CD14-positive monocyte (primary cell): ENCODE measurements at regions of chr9 and their contacts with region 1.

Region 1: GRCh38 chr9:113591001-113591898 is 127.7 kb downstream of the RGS3 start:
- DNase-seq: peak in 2 of 3 donors; percentile 48 to 49
- H3K4me3 ChIP-seq: no peak overlapping the region
- H3K4me3 Mint-ChIP-seq: no peak overlapping the region
- H3K27ac ChIP-seq: no peak overlapping the region
- H3K27ac Mint-ChIP-seq: peak overlapping the region in 3 of 7 donors; percentile 2 to 11 (median 2)
- H3K4me1 ChIP-seq: peaks cover 48 to 62% of the 10 kb centered on the region in 2 donors
- H3K4me1 Mint-ChIP-seq: peaks cover 59% of the 10 kb centered on the region
- H3K27me3 ChIP-seq: no peaks in the 10 kb centered on the region
- H3K27me3 Mint-ChIP-seq: no peaks in the 10 kb centered on the region
- CTCF ChIP-seq: peak; percentile 82

Region 2: DNA sequence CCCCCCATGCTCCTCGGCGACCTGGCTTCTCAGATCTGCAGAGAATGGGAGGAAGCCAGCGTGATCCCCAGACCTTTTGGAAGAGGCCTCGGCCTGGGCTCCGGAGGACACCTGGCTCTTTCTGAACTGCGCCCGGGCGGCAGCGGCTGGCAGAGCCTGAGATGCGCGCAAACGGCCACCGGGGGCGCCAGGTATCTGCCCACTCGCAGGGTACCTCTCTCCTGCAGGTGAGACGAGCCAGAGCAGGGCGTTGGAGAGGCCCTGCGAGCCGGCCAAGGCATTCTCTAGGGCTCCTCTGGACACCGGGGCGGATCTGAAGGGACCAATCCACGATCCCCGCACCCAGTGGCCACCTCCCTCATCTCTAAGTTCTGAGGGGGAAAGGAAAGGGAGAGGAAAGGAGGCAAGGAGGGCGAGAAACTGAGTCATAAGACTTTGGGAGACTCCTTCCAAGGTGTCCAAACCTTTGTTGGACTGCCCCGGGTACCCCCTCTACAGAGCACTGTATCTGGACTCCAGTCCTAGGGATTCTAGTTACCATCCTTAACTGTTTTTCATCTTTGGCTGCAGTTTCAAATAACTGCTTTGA is 645.5 kb before region 1 on chr9:
- intact Hi-C with region 1: no loop called
- DNase-seq: no peak
- H3K4me3 ChIP-seq: no peak overlapping the region
- H3K4me3 Mint-ChIP-seq: peak overlapping the region in 1 of 2 donors; percentile 26
- H3K27ac ChIP-seq: no peak overlapping the region
- H3K27ac Mint-ChIP-seq: no peak overlapping the region
- H3K4me1 ChIP-seq: no peaks in the 10 kb centered on the region
- H3K4me1 Mint-ChIP-seq: no peaks in the 10 kb centered on the region
- H3K27me3 ChIP-seq: peaks cover 0 to 8% of the 10 kb centered on the region in 2 donors
- H3K27me3 Mint-ChIP-seq: peaks cover 4 to 24% (median 12%) of the 10 kb centered on the region in 3 donors
- CTCF ChIP-seq: no peak

Region 3: GRCh38 chr9:113446323-113446740 is 144.9 kb before region 1 on chr9:
- intact Hi-C with region 1: loop called (anchors 5 to 10 kb)
- DNase-seq: peak in 2 of 3 donors; percentile 25 to 52
- H3K4me3 ChIP-seq: no peak overlapping the region
- H3K4me3 Mint-ChIP-seq: no peak overlapping the region
- H3K27ac ChIP-seq: no peak overlapping the region
- H3K27ac Mint-ChIP-seq: no peak overlapping the region
- H3K4me1 ChIP-seq: no peaks in the 10 kb centered on the region
- H3K4me1 Mint-ChIP-seq: no peaks in the 10 kb centered on the region
- H3K27me3 ChIP-seq: no peaks in the 10 kb centered on the region
- H3K27me3 Mint-ChIP-seq: no peaks in the 10 kb centered on the region
- CTCF ChIP-seq: peak; percentile 87

Region 4: DNA sequence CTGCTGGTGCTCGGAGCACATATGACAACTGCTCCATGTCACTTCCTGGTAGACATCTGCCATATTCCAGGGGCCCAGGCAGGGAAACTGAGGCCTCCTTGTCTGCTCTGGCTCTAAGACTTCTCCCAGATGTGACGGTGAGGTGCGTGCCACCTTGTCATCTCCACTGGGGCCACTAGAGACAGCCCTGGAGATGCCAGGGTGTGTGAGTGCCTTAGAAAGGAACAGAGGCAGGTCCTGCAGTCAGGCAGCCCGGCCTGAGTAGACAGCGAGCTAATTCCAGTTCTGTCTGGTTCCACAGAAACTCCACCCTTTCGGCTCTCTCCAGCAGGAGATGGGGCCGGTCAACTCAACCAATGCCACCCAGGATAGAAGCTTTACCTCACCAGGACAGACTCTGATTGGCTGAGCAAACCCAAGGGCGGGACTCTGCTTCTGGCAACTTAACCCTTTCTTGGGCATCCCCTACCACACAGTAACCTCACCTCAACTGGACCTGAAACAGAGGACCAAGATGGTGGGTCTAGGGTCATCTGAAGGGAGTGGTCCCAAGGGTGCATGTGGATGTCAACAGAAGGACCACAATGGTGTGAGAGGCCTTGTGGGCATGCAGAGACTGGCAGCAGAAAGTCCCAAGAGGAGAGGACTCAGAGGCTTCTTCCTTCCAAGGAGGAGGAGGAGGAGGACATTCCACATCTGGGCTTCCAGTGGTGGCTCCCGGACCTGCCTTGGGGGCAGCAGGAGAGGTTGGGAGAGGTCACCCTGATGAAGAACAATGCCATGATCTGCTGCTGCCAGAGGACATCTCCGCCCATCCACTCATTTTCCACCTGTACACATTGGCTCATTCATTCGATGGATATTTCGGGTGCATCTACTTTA is 50.0 kb before region 1 on chr9:
- intact Hi-C with region 1: no loop called
- DNase-seq: no peak
- H3K4me3 ChIP-seq: no peak overlapping the region
- H3K4me3 Mint-ChIP-seq: no peak overlapping the region
- H3K27ac ChIP-seq: no peak overlapping the region
- H3K27ac Mint-ChIP-seq: peak overlapping the region in 1 of 7 donors; percentile 67
- H3K4me1 ChIP-seq: no peaks in the 10 kb centered on the region
- H3K4me1 Mint-ChIP-seq: peaks cover 11% of the 10 kb centered on the region
- H3K27me3 ChIP-seq: no peaks in the 10 kb centered on the region
- H3K27me3 Mint-ChIP-seq: peaks cover 0 to 3% (median 0%) of the 10 kb centered on the region in 3 donors
- CTCF ChIP-seq: no peak